Activated naive CD4-positive, alpha-beta T cell treated with anti-CD3 and anti-CD28 coated beads, Interleukin-2, amount 10 ng/mL, durations not matched to agents 7 days and 5 days (primary cell): ENCODE measurements at regions of chr2 and their contacts with region 1.

Region 1: DNA sequence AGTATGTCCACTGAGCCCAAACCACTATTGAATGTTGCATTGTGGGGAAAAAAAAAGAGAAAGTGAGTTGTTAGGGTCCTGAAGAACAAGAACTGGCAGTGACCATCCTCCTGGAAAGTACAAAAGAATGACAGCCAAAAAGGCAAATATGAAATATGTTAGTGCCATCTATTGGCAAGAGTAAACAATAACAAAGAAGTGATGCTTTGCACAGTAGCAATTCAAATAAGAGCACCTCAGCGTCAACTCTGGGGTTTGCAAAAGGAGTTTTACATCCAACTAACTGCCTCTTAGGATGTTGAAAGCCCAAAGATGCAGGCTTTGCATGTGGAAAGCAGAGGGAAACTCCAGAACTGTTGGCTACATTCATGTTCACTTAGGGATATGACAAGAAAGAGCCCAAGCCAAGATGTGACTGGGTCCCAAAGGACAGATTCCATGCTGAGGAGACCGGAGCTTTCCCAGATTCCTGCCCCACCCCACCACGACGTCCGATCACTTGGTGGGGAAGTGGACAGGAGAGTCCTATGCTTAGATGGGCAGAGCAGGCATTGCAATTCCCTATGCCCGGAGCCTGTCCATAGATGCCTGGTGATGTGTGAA is 15.6 kb downstream of the TRABD2A start:
- DNase-seq: peak; percentile 23
- H3K4me3 Mint-ChIP-seq: no peak overlapping the region
- H3K27ac Mint-ChIP-seq: peak overlapping the region; percentile 65
- H3K4me1 Mint-ChIP-seq: peaks cover 88% of the 10 kb centered on the region
- H3K27me3 Mint-ChIP-seq: no peaks in the 10 kb centered on the region

Region 2: DNA sequence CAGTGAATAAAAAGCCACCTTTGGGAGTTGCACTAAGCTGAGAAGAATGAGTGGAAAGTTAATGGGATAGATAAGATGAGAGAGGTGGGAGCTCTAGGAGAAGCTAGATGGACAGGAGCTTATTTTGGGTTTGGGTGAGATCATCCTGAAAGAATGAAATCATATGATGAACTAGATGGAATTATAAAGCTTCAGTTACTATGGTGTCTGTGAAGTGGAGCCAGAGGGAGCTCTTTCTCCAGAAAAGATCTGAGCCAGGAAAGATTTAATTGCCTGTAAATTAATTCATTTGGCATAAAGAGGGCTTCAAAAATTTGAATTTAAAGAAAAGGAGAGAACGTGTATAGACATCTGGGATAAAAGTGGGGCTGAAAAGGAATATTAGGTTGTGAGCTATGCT is 338.7 kb before region 1 on chr2:
- CTCF ChIA-PET with region 1: interaction called, 13 read pairs
- DNase-seq: no peak
- H3K4me3 Mint-ChIP-seq: no peak overlapping the region
- H3K27ac Mint-ChIP-seq: no peak overlapping the region
- H3K4me1 Mint-ChIP-seq: peaks cover 3% of the 10 kb centered on the region
- H3K27me3 Mint-ChIP-seq: no peaks in the 10 kb centered on the region

Region 3: GRCh38 chr2:84741296-84741765 is 124.0 kb before region 1 on chr2:
- CTCF ChIA-PET with region 1: interaction called, 10 read pairs
- DNase-seq: peak; percentile 69
- H3K4me3 Mint-ChIP-seq: no peak overlapping the region
- H3K27ac Mint-ChIP-seq: peak overlapping the region; percentile 75
- H3K4me1 Mint-ChIP-seq: peaks cover 20% of the 10 kb centered on the region
- H3K27me3 Mint-ChIP-seq: peaks cover 11% of the 10 kb centered on the region